Left ventricle myocardium inferior (tissue), 1 donor: ENCODE measurements at regions of chr12 and their contacts with region 1.

Region 1: GRCh38 chr12:15276088-15276698 is 46.1 kb upstream of the PTPRO start:
- DNase-seq: no peak
- H3K4me3 ChIP-seq: no peak overlapping the region
- H3K27ac ChIP-seq: no peak overlapping the region
- H3K4me1 ChIP-seq: peaks cover 16% of the 10 kb centered on the region
- H3K27me3 ChIP-seq: peaks cover 16% of the 10 kb centered on the region
- CTCF ChIP-seq: peak; percentile 80

Region 2: DNA sequence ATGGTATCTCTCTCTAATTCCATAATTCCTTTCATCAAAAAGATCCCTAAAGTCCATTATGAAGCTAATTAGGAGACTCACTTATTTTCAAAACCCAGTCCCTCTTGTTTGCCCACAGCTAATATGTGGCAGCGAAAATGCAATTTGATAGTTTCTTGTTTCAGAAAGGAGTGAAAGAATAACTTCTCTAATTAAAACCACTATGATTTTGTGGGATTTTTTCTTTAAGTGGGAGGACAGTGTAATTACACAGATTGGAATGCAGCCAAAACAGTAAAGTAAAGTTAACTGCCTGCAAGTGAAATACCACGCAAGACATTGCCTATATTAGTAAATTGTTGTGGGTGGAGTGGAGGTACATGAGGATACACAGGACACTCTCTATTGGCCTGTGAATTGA is 96.2 kb after region 1 on chr12:
- intact Hi-C with region 1: no loop called
- DNase-seq: no peak
- H3K4me3 ChIP-seq: no peak overlapping the region
- H3K27ac ChIP-seq: no peak overlapping the region
- H3K4me1 ChIP-seq: no peaks in the 10 kb centered on the region
- H3K27me3 ChIP-seq: no peaks in the 10 kb centered on the region
- CTCF ChIP-seq: no peak

Region 3: DNA sequence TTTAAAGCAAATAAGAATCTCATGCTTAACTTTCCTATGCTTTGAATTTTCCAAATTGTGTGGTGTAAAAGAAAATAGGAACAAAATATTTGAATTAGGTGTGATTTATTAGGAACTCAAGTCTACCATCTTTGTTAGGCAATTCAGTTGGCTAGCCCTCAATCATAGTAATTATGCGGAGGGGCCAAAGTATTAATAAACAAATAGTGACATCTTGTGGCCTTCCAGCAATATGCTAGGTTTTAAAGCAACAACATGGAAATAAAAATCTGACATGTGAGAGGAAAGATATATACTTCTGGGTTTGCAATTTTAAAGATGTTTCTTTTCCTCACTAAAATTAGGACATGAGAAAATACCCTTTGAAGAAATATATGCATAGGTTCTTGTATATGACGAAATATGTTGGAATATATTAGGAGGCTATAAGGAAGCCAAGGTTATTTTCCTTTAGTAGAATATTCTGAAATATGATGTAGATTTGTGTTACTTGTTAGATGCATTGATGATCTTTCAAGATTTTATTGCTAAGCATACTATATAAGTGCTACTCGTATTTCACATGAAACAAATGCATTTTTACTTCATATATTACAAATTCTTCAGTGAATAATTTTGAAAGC is 246.5 kb after region 1 on chr12:
- intact Hi-C with region 1: loop called (anchors 5 kb)
- DNase-seq: no peak
- H3K4me3 ChIP-seq: no peak overlapping the region
- H3K27ac ChIP-seq: no peak overlapping the region
- H3K4me1 ChIP-seq: no peaks in the 10 kb centered on the region
- H3K27me3 ChIP-seq: peaks cover 57% of the 10 kb centered on the region
- CTCF ChIP-seq: peak; percentile 67